CD14-positive monocyte (primary cell): ENCODE measurements at regions of chr1 and their contacts with region 1.

Region 1: DNA sequence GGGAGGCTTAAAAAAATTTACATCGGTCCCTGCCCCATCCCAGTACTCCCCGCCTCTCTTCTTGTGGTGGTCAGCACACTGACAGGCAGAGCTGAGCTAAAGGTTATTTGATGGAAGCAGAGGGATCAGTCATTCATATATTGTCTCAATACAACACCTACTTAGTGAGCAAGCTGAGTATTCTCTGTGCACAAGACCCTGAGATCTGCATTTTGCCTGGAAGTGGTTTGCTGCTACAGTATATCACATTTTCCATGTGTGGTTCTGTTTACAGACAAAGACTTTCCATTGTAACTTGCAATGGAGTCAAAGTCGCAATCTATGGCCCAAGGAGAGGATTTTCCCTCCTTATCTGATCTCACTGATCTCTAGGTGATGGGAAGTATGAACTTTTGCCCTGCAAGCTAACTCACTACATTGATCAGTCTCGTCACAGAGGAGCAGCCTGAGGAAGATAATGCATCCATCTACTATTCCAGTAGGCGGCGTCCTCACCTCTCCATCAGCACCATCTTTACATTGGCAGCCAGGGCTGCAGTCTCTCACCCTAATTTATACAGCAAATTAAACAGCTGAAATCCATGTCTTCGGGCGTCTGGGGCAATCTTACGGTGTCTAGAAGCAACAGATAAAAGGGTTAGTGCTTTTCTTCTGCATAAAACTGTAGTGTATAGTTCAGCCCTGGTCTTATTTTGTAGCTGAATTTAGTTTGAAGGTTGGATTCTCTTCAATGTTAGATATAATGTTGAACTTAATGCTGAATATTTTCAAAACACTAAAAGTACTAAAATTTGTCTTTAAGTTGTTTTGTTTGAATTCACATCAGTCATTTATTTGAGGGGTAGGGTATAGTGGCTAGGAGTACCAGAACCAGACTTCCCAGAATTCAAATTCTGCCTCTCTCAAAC is 3.2 kb upstream of the TRAF5 start:
- DNase-seq: peak; percentile 42 to 51 (median 44)
- H3K4me3 ChIP-seq: no peak overlapping the region
- H3K4me3 Mint-ChIP-seq: no peak overlapping the region
- H3K27ac ChIP-seq: no peak overlapping the region
- H3K27ac Mint-ChIP-seq: no peak overlapping the region
- H3K4me1 ChIP-seq: peaks cover 11 to 12% of the 10 kb centered on the region in 2 donors
- H3K4me1 Mint-ChIP-seq: peaks cover 15% of the 10 kb centered on the region
- H3K27me3 ChIP-seq: no peaks in the 10 kb centered on the region
- H3K27me3 Mint-ChIP-seq: peaks cover 11 to 28% (median 21%) of the 10 kb centered on the region in 3 donors
- CTCF ChIP-seq: peak; percentile 87

Region 2: GRCh38 chr1:211386921-211387320 is 63.5 kb after region 1 on chr1:
- intact Hi-C with region 1: no loop called
- DNase-seq: no peak
- H3K4me3 ChIP-seq: no peak overlapping the region
- H3K4me3 Mint-ChIP-seq: no peak overlapping the region
- H3K27ac ChIP-seq: no peak overlapping the region
- H3K27ac Mint-ChIP-seq: no peak overlapping the region
- H3K4me1 ChIP-seq: peaks cover 12 to 14% of the 10 kb centered on the region in 2 donors
- H3K4me1 Mint-ChIP-seq: peaks cover 16% of the 10 kb centered on the region
- H3K27me3 ChIP-seq: no peaks in the 10 kb centered on the region
- H3K27me3 Mint-ChIP-seq: peaks cover 0 to 4% (median 0%) of the 10 kb centered on the region in 3 donors
- CTCF ChIP-seq: no peak

Region 3: DNA sequence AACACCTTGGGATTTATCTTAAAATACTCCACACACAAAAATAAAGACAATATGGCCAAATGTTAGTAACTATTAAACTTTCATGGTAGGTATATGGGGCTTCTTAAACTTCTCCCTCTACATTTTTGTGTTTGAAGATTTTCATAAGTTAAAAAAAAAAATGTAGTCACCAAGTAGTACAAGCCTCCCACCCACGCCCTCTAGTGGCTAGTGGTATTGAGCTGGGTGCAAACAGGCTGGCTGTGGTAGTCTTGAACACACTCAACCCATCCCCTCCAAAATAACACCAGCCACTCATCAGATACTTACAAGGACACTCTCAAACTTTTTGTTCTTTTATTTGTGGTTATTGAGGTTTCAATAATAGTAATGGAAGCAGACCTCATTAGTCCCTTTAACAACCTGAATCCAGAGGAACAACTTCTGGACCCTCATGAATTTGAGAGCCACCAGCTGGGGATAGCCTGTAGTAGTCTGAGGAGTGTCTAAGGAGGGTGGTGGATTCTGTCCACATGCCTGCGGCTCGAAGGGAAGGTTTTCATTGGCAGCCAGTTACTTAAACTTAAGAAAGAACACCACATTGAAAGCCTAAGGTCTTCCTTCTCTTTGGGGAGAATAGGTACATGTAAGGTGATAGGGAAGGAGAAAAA is 152.9 kb after region 1 on chr1:
- intact Hi-C with region 1: loop called in 1 of 2 experiments (anchors 10 kb)
- DNase-seq: peak; percentile 40 to 52 (median 50)
- H3K4me3 ChIP-seq: no peak overlapping the region
- H3K4me3 Mint-ChIP-seq: no peak overlapping the region
- H3K27ac ChIP-seq: no peak overlapping the region
- H3K27ac Mint-ChIP-seq: peak overlapping the region in 1 of 7 donors; percentile 5
- H3K4me1 ChIP-seq: no peaks in the 10 kb centered on the region
- H3K4me1 Mint-ChIP-seq: peaks cover 6% of the 10 kb centered on the region
- H3K27me3 ChIP-seq: peaks cover 9 to 18% of the 10 kb centered on the region in 2 donors
- H3K27me3 Mint-ChIP-seq: peaks cover 17 to 27% (median 19%) of the 10 kb centered on the region in 3 donors
- CTCF ChIP-seq: peak; percentile 81

Region 4: GRCh38 chr1:211654838-211655787 is 331.7 kb after region 1 on chr1:
- intact Hi-C with region 1: loop called in 1 of 2 experiments (anchors 5 kb)
- DNase-seq: peak; percentile 67 to 77 (median 74)
- H3K4me3 ChIP-seq: no peak overlapping the region
- H3K4me3 Mint-ChIP-seq: no peak overlapping the region
- H3K27ac ChIP-seq: no peak overlapping the region
- H3K27ac Mint-ChIP-seq: no peak overlapping the region
- H3K4me1 ChIP-seq: peaks cover 0 to 9% of the 10 kb centered on the region in 2 donors
- H3K4me1 Mint-ChIP-seq: peaks cover 16% of the 10 kb centered on the region
- H3K27me3 ChIP-seq: no peaks in the 10 kb centered on the region
- H3K27me3 Mint-ChIP-seq: peaks cover 0 to 5% (median 2%) of the 10 kb centered on the region in 3 donors
- CTCF ChIP-seq: peak; percentile 94